Activated T-helper 1 cell treated with anti-CD3 and anti-CD28 coated beads, Interleukin-12 subunit alpha, Interleukin-12 subunit beta, Interleukin-2, Interleukin-4 antibody, amounts not matched to agents 30 ng/mL and 10 ng/mL and 1 ng/mL, durations not matched to agents 14 hours and 24 hours and 36 hours (primary cell): ENCODE measurements at regions of chr16 and their contacts with region 1.

Region 1: GRCh38 chr16:84925092-84925772 is 86.1 kb downstream of the ZDHHC7 start:
- DNase-seq: peak; percentile 41
- H3K4me3 Mint-ChIP-seq: no peak overlapping the region
- H3K27ac Mint-ChIP-seq: no peak overlapping the region
- H3K4me1 Mint-ChIP-seq: no peaks in the 10 kb centered on the region
- H3K27me3 Mint-ChIP-seq: peaks cover 4% of the 10 kb centered on the region

Region 2: GRCh38 chr16:84952335-84953189 is 27.3 kb after region 1 on chr16:
- intact Hi-C with region 1: loop called (anchors 1 kb)
- DNase-seq: peak; percentile 55
- H3K4me3 Mint-ChIP-seq: no peak overlapping the region
- H3K27ac Mint-ChIP-seq: no peak overlapping the region
- H3K4me1 Mint-ChIP-seq: no peaks in the 10 kb centered on the region
- H3K27me3 Mint-ChIP-seq: no peaks in the 10 kb centered on the region

Region 3: GRCh38 chr16:84970447-84971127 is 45.4 kb after region 1 on chr16:
- intact Hi-C with region 1: loop called (anchors 1 kb)
- DNase-seq: peak; percentile 62
- H3K4me3 Mint-ChIP-seq: no peak overlapping the region
- H3K27ac Mint-ChIP-seq: no peak overlapping the region
- H3K4me1 Mint-ChIP-seq: peaks cover 6% of the 10 kb centered on the region
- H3K27me3 Mint-ChIP-seq: peaks cover 2% of the 10 kb centered on the region

Region 4: DNA sequence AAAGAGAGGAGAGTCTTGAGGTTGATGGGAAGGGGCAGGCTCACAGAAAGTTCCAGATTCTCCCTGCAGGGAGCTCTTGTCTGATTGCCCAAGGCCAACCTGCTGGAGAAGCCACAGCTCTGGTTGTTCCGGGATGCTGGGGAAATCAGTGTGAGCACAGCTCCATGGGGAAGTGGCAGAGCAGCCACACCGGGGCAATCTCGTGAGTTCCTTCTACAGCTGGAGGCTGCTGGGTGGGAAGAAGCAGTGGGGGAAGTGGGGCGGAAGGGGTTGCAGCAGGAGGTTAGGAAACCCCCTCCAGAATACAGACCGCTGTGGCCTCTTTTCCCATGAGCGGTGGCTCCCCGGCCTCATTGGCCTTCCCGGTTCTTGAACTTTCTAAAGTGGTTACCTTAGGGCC is 136.3 kb after region 1 on chr16:
- intact Hi-C with region 1: no loop called
- DNase-seq: no peak
- H3K4me3 Mint-ChIP-seq: no peak overlapping the region
- H3K27ac Mint-ChIP-seq: no peak overlapping the region
- H3K4me1 Mint-ChIP-seq: peaks cover 12% of the 10 kb centered on the region
- H3K27me3 Mint-ChIP-seq: peaks cover 4% of the 10 kb centered on the region

Region 5: GRCh38 chr16:85086347-85087291 is 161.4 kb after region 1 on chr16:
- intact Hi-C with region 1: loop called (anchors 1 kb)
- DNase-seq: peak; percentile 64
- H3K4me3 Mint-ChIP-seq: no peak overlapping the region
- H3K27ac Mint-ChIP-seq: no peak overlapping the region
- H3K4me1 Mint-ChIP-seq: peaks cover 7% of the 10 kb centered on the region
- H3K27me3 Mint-ChIP-seq: no peaks in the 10 kb centered on the region

Region 6: DNA sequence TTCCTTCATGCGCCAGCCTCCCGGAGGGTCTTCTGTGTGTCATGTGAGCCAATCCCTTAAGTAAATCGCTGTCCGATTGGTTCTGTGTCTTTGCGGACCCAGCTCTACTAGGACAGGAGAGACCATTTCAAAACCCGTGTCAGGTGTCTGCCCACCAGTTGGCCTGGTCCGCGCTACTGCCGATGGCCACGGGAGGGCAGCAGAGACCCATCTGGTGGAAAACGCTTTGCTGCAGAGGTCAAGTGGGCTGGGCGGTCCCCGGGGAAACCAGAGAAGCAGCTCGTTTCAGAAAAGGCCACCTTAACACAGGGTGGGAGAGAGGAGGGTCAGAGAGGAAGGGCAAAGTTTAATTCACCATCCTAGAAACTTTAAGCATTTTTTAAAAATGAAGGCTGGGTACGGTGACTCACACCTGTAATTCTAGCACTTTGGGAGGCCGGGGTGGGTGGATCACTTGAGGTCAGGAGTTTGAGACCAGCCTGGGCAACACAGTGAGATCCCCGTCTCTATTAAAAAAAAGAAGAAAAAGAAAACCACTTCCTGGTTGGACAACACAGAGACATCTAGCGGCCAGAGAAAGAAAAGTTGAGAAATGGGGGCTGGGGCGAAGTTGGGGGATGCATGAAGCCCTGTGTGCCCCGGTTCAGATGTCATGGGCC is 189.8 kb after region 1 on chr16:
- intact Hi-C with region 1: no loop called
- DNase-seq: peak; percentile 68
- H3K4me3 Mint-ChIP-seq: peak overlapping the region; percentile 60
- H3K27ac Mint-ChIP-seq: peak overlapping the region; percentile 70
- H3K4me1 Mint-ChIP-seq: peaks cover 7% of the 10 kb centered on the region
- H3K27me3 Mint-ChIP-seq: peaks cover 1% of the 10 kb centered on the region